Activated CD4-positive, alpha-beta T cell treated with anti-CD3 and anti-CD28 coated beads for 36 hours (primary cell): ENCODE measurements at regions of chr20 and their contacts with region 1.

Region 1: DNA sequence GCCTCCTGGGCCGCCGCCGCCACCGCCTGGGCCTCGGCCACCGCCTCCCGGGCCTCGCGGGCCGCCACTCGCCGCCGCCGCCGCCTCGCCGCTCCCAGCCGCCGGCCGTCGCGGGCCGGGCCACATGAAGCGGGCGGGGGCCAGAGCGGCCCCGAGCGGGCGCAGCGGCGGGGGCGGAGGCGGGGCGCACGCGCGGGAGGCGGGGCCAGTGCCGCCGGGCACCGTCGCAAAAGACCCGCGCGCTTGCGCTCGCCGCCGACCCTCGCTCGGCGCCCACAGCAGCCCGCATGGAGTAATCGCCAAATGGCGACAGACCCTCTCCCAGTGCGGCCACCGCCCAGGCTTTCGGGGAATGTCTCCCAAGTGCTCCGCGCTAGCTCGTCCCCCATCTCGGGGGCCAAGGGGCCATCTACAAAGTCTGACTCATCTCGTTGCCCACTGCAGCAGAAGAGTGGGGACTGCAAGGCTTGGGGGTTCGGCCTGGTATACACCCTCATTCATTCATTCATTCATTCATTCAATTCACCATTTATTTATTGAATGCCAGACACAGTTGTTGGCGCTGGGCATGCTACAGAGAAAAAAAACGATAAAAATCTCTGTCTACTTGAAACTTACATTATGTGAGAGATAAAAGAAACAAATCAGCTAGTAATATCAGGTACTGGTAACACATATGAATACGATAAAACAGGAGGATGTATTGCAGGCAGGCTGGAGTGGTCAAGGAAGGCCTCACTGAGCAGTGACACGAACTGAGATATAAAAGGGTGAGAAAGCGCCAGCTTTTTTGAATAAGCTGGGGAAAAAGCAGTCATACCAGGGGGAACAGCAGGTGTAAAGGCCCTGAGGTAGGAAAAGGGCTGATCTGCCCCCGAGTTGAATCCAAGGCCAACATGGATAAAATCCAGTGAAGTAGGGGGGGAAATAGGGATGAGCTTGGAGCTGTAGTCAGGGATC is at the start of gene B4GALT5:
- DNase-seq: peak; percentile 77
- ATAC-seq: peak; percentile 73
- H3K4me3 Mint-ChIP-seq: peak within 1 kb of the TSS; percentile 82
- H3K27ac Mint-ChIP-seq: peak within 1 kb of the TSS; percentile 91
- H3K4me1 Mint-ChIP-seq: peaks cover 49% of the 10 kb centered on the region
- H3K27me3 Mint-ChIP-seq: peaks cover 5% of the 10 kb centered on the region
- total RNA-seq, gene B4GALT5: 18.6 to 19.6 TPM

Region 2: GRCh38 chr20:48722737-48723191 is 991.3 kb before region 1 on chr20:
- CTCF ChIA-PET with region 1: no interaction called
- POLR2A ChIA-PET with region 1: no interaction called
- intact Hi-C with region 1: no loop called
- DNase-seq: peak; percentile 29
- ATAC-seq: no peak
- H3K4me3 Mint-ChIP-seq: no peak overlapping the region
- H3K27ac Mint-ChIP-seq: peak overlapping the region; percentile 71
- H3K4me1 Mint-ChIP-seq: peaks cover 37% of the 10 kb centered on the region
- H3K27me3 Mint-ChIP-seq: no peaks in the 10 kb centered on the region

Region 3: DNA sequence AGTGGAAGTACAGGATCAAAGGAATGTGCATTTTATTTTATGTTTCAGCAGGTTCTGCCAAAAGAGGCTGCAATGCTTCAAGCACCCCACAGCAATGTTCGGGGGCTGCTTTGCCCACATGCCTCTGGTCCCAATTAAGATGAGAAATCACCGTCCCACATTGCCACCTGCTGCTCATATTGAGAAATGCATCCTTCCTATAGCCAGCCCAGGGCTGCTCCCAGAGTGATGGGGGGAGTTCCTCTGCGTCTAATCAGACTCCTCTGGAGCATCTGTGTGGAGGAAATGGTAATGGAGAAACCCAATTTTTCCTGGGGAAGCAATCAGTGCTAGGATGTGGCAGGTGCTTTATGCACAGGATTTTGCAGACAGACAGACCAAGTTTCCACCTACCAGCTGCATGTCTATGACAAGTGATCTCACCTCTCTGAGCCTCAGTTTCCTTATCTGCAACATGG is 179.7 kb before region 1 on chr20:
- CTCF ChIA-PET with region 1: no interaction called
- POLR2A ChIA-PET with region 1: no interaction called
- intact Hi-C with region 1: loop called in 1 of 2 experiments (anchors 10 kb)
- DNase-seq: peak; percentile 79
- ATAC-seq: peak; percentile 74
- H3K4me3 Mint-ChIP-seq: no peak overlapping the region
- H3K27ac Mint-ChIP-seq: peak overlapping the region; percentile 65
- H3K4me1 Mint-ChIP-seq: peaks cover 15% of the 10 kb centered on the region
- H3K27me3 Mint-ChIP-seq: peaks cover 12% of the 10 kb centered on the region

Region 4: DNA sequence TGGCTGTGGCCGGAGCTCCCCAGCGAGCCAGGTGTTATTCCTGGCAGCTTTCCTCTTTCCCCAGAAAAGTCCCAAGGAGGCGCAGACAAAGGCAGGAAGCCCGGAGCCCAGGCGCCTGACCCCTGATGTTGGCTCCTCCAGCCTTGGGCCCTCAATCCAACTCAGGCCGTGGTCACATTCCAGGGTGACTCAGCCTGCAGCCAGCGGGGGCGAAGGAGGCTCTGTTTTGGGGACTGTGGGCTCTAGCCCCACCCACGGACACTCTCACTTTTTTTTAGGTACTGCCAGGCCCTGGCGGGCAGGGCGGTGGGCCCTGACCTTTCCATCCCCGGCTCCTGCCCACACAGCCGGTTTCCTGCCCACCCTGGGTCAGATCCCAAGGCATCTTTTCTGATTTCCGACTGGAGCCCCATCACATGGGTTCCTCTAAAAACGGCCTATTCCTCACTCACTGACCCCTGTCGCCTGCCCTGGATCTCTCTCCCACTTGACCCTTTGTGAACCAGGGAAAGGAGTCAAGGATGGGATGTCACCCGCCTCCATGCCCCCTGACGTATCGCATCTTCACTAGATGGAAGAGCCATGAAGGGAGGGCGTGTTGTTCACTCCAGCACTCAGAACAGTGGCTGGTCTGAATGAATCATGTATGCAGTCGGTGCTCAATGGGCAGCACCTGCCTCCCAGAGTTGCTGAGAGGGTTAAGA is 151.6 kb before region 1 on chr20:
- CTCF ChIA-PET with region 1: no interaction called
- POLR2A ChIA-PET with region 1: no interaction called
- intact Hi-C with region 1: no loop called
- DNase-seq: no peak
- ATAC-seq: no peak
- H3K4me3 Mint-ChIP-seq: no peak overlapping the region
- H3K27ac Mint-ChIP-seq: no peak overlapping the region
- H3K4me1 Mint-ChIP-seq: no peaks in the 10 kb centered on the region
- H3K27me3 Mint-ChIP-seq: peaks cover 29% of the 10 kb centered on the region

Region 5: GRCh38 chr20:49668181-49668877 is 45.7 kb before region 1 on chr20:
- CTCF ChIA-PET with region 1: interaction called, 3 read pairs
- POLR2A ChIA-PET with region 1: interaction called, 3 read pairs
- intact Hi-C with region 1: loop called (anchors 2 to 10 kb)
- DNase-seq: peak; percentile 77
- ATAC-seq: peak; percentile 69
- H3K4me3 Mint-ChIP-seq: peak overlapping the region; percentile 47
- H3K27ac Mint-ChIP-seq: peak overlapping the region; percentile 72
- H3K4me1 Mint-ChIP-seq: peaks cover 40% of the 10 kb centered on the region
- H3K27me3 Mint-ChIP-seq: no peaks in the 10 kb centered on the region

Region 6: DNA sequence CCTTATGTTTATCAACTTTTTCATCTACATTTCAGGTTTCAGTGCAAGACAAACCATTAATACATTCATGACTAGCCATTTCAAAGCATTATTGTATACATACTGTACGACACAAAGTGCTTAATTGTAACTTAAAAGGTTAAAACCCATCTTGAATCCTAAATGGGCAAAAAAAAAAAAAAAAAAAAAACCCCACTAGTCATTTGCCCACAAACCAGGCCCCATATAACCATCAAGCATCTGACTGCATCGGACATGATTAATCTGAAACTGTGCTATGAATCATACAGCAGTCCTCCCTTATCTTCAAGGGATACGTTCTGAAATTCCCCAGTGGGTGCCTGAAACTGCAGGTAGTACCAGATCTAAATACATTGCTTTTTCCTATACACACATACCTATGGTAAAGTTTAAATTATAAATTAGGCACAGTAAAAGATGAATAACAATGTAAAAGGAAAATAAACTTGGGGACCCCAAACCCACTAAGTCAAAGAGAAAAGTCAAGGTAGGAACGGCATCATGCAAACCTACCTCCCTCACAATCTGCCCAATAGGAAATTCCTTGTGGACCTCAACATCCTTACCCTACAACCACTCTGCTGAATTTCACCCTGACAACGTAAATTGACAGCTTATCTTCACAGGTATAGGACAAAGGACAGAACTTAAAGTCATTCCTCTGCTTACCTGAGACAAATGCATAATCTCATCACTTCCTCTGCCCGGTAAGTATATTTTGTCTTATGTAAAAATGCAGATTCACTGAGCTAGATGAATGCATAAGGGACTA is 14.6 kb before region 1 on chr20:
- CTCF ChIA-PET with region 1: interaction called, 3 read pairs
- POLR2A ChIA-PET with region 1: no interaction called
- intact Hi-C with region 1: loop called in 1 of 2 experiments (anchors 1 kb)
- DNase-seq: peak; percentile 47
- ATAC-seq: peak; percentile 87
- H3K4me3 Mint-ChIP-seq: peak overlapping the region; percentile 34
- H3K27ac Mint-ChIP-seq: peak overlapping the region; percentile 73
- H3K4me1 Mint-ChIP-seq: peaks cover 66% of the 10 kb centered on the region
- H3K27me3 Mint-ChIP-seq: no peaks in the 10 kb centered on the region

Region 7: DNA sequence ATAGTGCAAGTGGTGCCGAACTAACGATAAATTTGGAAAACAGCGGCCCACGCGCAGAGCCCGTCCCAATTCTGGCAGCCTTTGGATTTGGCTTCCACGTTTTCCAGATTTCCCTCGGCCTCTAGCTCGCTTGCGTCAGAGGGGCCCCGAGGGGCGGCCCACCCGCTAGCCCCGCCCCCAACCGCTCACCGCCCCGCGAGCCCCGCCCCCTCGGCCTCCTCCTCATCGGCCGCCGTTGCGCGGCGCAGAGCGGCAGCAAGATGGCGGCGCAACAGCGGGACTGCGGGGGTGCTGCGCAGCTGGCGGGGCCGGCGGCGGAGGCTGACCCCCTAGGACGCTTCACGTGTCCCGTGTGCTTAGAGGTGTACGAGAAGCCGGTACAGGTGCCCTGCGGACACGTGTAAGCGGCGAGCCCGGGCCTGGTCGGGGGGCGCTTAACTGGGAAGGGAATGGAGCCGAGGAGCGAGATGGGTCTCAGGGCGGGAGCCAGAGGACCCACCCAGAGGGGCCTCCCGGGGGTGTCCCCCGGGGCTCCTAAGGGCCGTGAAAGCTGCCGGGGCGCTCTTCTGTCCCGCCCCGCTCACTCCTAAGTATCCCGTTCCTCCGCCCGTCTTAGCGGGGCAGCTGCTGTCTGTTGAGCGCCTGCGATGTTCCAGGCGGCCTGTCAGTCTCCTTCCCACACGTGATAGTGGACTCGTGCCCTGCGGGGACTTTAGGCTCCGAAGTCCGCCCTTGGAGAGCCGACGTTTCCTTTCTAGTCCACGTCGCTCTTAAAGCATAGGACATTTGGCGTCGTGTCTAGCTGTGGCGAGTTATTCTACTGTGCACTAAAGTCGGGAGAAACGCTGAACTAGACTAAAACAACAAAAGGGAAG is 222.4 kb after region 1 on chr20 and contains the start of gene RNF114:
- CTCF ChIA-PET with region 1: no interaction called
- POLR2A ChIA-PET with region 1: no interaction called
- intact Hi-C with region 1: loop called in 1 of 2 experiments (anchors 1 kb)
- DNase-seq: peak; percentile 96
- ATAC-seq: peak; percentile 93
- H3K4me3 Mint-ChIP-seq: peak within 1 kb of the TSS; percentile 85
- H3K27ac Mint-ChIP-seq: peak within 1 kb of the TSS; percentile 85
- H3K4me1 Mint-ChIP-seq: peaks cover 41% of the 10 kb centered on the region
- H3K27me3 Mint-ChIP-seq: no peaks in the 10 kb centered on the region
- total RNA-seq, gene RNF114: 47.5 to 66.6 TPM

Region 8: GRCh38 chr20:50242853-50243609 is 529.0 kb after region 1 on chr20:
- CTCF ChIA-PET with region 1: no interaction called
- POLR2A ChIA-PET with region 1: no interaction called
- intact Hi-C with region 1: no loop called
- DNase-seq: no peak
- ATAC-seq: no peak
- H3K4me3 Mint-ChIP-seq: no peak overlapping the region
- H3K27ac Mint-ChIP-seq: no peak overlapping the region
- H3K4me1 Mint-ChIP-seq: no peaks in the 10 kb centered on the region
- H3K27me3 Mint-ChIP-seq: peaks cover 2% of the 10 kb centered on the region

Region 9: DNA sequence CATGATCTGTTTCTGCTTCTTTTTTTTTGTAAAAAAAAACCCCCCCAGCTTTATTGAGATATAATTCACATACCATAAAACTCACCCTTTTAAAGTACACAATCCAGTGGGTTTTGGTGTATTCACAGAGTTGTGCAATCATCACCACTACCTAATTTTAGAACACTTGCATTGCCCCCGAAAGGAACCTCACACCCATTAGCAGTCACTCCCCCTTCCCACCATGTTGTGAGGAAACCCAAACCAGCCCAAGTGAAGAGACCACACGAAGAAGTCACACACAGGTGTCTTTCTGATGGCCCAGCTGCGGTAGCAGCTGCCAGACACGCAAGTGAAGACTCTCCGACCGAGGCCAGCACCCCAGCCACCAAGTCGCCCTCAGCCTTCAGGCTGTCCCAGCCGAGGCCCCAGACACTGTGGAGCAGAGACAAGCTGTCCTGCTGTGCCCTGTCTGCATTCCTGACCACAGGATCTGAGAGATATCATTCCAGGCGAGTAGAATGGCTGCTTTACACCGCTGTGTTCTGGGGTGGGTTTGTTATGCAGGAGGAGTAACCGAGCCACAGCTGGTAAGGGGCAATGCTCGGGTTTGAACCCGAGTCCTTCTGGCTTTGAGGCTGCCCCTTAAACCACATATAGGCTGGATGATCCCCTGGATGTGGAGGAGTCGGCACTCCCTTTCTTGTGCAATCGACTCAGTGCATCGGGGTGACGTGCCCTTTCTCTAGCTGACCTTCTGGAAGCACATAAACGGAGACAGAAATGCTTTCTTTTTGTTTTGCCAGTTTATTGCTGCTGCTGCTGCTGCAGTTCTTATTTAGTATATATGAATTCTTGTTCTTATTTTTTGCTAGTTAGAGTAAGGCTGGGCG is 737.1 kb after region 1 on chr20:
- CTCF ChIA-PET with region 1: no interaction called
- POLR2A ChIA-PET with region 1: no interaction called
- intact Hi-C with region 1: no loop called
- DNase-seq: no peak
- ATAC-seq: peak; percentile 45
- H3K4me3 Mint-ChIP-seq: peak overlapping the region; percentile 26
- H3K27ac Mint-ChIP-seq: peak overlapping the region; percentile 22
- H3K4me1 Mint-ChIP-seq: peaks cover 13% of the 10 kb centered on the region
- H3K27me3 Mint-ChIP-seq: peaks cover 35% of the 10 kb centered on the region